ENCODE measurements at regions of chr1 and their contacts with region 1.

Region 1: DNA sequence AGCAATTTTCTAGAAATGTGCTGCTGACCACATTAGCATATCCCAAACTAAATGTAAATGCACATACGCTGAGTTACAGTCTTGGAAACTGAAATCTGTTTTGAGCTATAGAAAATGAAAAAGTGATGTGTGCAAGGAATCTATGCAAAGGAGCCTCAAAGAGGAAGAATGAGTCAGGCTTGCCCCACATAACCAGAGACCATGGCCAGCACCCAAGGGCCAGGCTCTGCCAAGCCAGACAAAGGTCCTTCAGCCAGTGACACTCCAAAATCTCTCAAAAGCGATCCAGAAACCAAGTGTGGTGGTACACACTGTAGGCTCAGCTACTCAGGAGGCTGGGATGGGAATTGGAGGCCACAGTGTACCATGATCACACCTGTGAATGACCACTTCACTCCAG is 195.2 kb downstream of the TOMM20 start:
- DNase-seq: peak; percentile 90 to 94 (median 92)
- H3K4me3 ChIP-seq: no peak overlapping the region
- H3K4me3 Mint-ChIP-seq: peak overlapping the region in 1 of 2 donors; percentile 55
- H3K27ac ChIP-seq: peak overlapping the region; percentile 95 to 98
- H3K27ac Mint-ChIP-seq: peak overlapping the region; percentile 97 to 99 (median 99)
- H3K4me1 ChIP-seq: peaks cover 57 to 85% of the 10 kb centered on the region in 2 donors
- H3K4me1 Mint-ChIP-seq: peaks cover 65% of the 10 kb centered on the region
- H3K27me3 ChIP-seq: no peaks in the 10 kb centered on the region
- H3K27me3 Mint-ChIP-seq: no peaks in the 10 kb centered on the region
- CTCF ChIP-seq: no peak

Region 2: GRCh38 chr1:234875953-234876855 is 57.3 kb before region 1 on chr1:
- intact Hi-C with region 1: no loop called
- DNase-seq: peak; percentile 66 to 69 (median 68)
- H3K4me3 ChIP-seq: peak overlapping the region in 1 of 3 experiments; percentile 28
- H3K4me3 Mint-ChIP-seq: peak overlapping the region; percentile 51 to 57
- H3K27ac ChIP-seq: peak overlapping the region; percentile 75 to 85
- H3K27ac Mint-ChIP-seq: peak overlapping the region; percentile 85 to 96 (median 88)
- H3K4me1 ChIP-seq: peaks cover 70 to 82% of the 10 kb centered on the region in 2 donors
- H3K4me1 Mint-ChIP-seq: peaks cover 81% of the 10 kb centered on the region
- H3K27me3 ChIP-seq: no peaks in the 10 kb centered on the region
- H3K27me3 Mint-ChIP-seq: no peaks in the 10 kb centered on the region
- CTCF ChIP-seq: no peak

Region 3: GRCh38 chr1:234887016-234887900 is 46.2 kb before region 1 on chr1:
- intact Hi-C with region 1: loop called in 1 of 2 experiments (anchors 5 kb)
- DNase-seq: no peak
- H3K4me3 ChIP-seq: no peak overlapping the region
- H3K4me3 Mint-ChIP-seq: no peak overlapping the region
- H3K27ac ChIP-seq: no peak overlapping the region
- H3K27ac Mint-ChIP-seq: peak overlapping the region in 1 of 7 donors; percentile 28
- H3K4me1 ChIP-seq: peaks cover 11 to 50% of the 10 kb centered on the region in 2 donors
- H3K4me1 Mint-ChIP-seq: peaks cover 35% of the 10 kb centered on the region
- H3K27me3 ChIP-seq: no peaks in the 10 kb centered on the region
- H3K27me3 Mint-ChIP-seq: peaks cover 3 to 8% (median 3%) of the 10 kb centered on the region in 3 donors
- CTCF ChIP-seq: no peak